Lower leg skin (tissue), 4 donors: ENCODE measurements at regions of chrX and their contacts with region 1.

Region 1: DNA sequence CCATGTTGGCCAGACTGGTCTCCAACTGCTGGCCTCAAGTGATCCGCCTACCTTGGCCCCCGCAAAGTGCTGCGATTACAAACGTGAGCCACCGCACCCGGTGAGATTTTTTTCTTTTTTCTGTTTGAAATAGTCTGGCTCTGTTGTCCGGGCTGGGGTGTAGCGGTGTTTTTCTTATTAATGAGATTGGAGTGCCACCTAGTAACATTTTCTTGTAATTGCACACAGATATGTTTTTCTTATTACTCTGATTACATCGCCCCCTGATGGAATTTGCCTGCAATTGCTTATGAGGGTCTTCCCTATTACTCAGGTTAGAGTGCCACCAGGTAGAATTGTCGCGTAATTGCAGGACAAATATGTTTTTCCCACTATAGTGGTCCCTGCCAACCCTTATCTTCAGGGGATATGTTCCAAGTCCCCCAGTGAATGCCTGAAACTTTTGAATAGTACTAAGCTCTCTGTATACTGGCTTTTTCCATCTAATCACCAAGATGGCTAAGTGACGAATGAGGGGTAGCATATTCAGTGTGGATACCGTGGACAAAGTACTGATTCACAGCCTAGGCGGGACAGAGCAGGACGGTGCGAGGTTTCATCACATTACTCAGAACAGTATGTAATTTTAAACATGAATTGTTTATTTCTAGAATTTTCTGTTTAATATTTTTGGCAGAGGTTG is 8.6 kb upstream of the PDHA1 start:
- DNase-seq: no peak
- H3K4me3 ChIP-seq: no peak overlapping the region
- CTCF ChIP-seq: no peak
- POLR2A ChIP-seq: no peak

Region 2: GRCh38 chrX:18390941-18391538 is 944.0 kb before region 1 on chrX:
- intact Hi-C with region 1: loop called (anchors 10 kb)
- DNase-seq: peak; percentile 54 to 94
- H3K4me3 ChIP-seq: no peak overlapping the region
- CTCF ChIP-seq: peak in 1 of 3 donors; percentile 30
- POLR2A ChIP-seq: no peak

Region 3: DNA sequence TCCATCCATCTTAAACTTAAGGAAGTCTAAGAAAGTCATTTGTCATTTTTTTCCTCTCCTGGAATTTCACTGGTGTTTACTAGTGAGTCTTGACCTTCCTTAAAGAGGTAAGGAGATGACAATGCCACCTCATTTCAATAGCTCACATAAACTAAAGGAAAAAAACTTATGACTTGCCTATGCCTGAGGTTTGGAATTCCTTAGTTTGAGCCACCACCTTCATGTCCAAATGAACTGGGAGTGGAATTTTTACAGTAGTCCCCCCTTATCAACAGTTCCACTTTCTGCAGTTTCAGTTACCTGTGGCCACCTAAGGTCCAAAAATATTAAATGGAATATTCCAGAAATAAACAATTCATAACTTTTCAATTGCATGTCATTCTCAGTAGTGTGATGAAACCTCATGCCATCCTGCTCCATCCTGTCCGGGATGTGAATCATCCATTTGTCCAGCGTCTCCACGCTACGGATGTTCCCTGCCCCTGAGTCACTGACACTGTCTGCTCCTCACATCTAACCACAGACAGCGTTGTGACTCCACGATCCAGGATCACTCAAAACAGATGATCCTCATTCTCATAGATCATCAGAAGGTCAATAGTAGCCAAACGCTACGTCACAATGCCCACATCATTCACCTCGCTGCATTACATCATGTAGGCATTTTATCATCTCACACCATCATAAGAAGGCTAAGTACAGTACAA is 374.9 kb after region 1 on chrX:
- intact Hi-C with region 1: no loop called
- DNase-seq: no peak
- H3K4me3 ChIP-seq: no peak overlapping the region
- CTCF ChIP-seq: no peak
- POLR2A ChIP-seq: no peak

Region 4: GRCh38 chrX:21166302-21166982 is 1831.4 kb after region 1 on chrX:
- intact Hi-C with region 1: no loop called
- DNase-seq: no peak
- H3K4me3 ChIP-seq: no peak overlapping the region
- CTCF ChIP-seq: no peak
- POLR2A ChIP-seq: no peak